ENCODE measurements at regions of chr5 and their contacts with region 1.

Region 1: GRCh38 chr5:115825948-115826347 is 9.5 kb upstream of the CDO1 start:
- DNase-seq: no peak
- H3K4me3 ChIP-seq: no peak overlapping the region
- H3K4me3 Mint-ChIP-seq: no peak overlapping the region
- H3K27ac Mint-ChIP-seq: no peak overlapping the region
- H3K4me1 ChIP-seq: no peaks in the 10 kb centered on the region
- H3K4me1 Mint-ChIP-seq: peaks cover 1% of the 10 kb centered on the region
- H3K27me3 ChIP-seq: no peaks in the 10 kb centered on the region
- H3K27me3 Mint-ChIP-seq: no peaks in the 10 kb centered on the region
- CTCF ChIP-seq: no peak

Region 2: DNA sequence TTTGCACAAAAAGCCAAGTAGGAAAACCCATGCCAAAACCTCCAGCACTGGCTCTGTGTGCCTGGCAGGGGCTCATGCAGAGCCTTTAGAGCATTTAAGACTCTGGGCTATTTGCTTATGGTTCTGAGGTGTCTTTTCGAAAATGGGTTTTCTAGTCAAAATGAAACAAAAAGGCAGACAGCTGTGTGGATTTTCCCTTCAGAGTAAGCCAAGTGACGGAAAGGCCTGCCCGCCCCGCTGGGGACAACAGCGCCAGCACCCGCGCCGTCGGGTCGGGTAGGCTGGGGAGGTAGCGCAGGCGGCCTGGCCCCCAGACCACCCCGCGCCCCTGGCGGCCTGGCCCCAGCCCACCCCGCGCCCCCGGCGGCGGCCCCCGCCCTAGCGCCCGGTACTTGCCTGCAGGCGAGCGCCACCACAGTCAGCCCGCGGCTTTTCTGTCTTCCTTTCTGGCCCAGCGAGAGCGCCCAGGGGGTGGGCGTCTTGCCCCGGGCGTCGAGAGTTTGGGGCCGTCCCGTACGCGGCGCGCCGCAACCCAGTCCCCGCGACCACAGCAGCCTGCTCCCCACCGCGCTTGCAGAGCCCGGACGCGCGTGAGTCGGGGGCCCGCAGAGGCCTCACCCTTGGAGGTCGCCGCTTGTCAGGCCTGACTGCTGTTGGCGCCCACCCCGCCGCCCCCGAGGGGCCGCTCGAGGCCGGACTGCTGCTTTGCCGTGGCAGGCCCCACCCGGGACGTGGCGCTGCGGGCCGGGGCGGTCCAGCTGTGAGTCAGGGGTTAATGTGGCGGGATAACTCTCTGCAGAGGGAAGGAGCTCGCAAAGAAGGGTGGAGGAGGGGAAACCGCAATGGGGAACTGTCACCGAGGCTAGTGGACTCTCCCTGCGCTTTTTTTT is 224.0 kb before region 1 on chr5 and contains the start of gene TICAM2:
- CTCF ChIA-PET with region 1: no interaction called
- POLR2A ChIA-PET with region 1: no interaction called
- intact Hi-C with region 1: no loop called
- DNase-seq: peak; percentile 37 to 46
- H3K4me3 ChIP-seq: peak within 1 kb of the TSS; percentile 46
- H3K4me3 Mint-ChIP-seq: peak within 1 kb of the TSS; percentile 35
- H3K27ac Mint-ChIP-seq: no peak within 1 kb of the TSS
- H3K4me1 ChIP-seq: no peaks in the 10 kb centered on the region
- H3K4me1 Mint-ChIP-seq: peaks cover 13% of the 10 kb centered on the region
- H3K27me3 ChIP-seq: no peaks in the 10 kb centered on the region
- H3K27me3 Mint-ChIP-seq: no peaks in the 10 kb centered on the region
- CTCF ChIP-seq: no peak
- total RNA-seq, gene TICAM2: 0.91 TPM in 2 replicates

Region 3: DNA sequence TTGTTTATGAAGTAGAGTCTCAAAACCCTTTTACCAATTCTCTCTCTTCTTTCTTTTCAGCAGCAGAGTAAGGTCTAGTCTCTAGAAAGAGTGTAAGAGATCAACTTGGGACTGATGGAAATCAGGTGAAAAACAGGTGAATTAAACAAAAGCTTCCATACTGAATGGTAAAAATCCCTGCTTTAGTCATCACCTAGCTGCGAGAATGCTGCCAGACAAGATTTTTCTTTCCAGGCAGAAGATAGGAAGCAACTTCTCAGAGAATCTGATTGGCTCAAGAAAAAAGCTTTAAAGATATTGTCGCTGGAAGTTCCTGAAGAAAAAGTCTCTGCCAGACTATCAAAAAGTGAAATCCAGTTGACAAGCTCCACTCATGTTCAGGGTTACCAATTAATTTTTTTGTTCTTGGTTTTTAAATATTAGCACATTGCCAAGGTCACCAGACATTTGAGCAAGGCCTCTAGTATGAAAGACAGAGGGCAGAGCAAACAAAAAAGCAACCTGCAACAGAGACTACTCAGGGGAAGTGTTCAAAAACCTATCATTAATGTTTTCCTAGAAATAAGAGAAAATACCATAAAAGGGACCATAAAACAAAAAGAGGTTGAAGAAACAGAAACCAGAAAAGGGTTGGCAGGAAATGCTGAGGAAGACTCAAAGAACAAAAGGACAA is 18.8 kb before region 1 on chr5:
- CTCF ChIA-PET with region 1: no interaction called
- POLR2A ChIA-PET with region 1: no interaction called
- intact Hi-C with region 1: loop called (anchors 2 kb)
- DNase-seq: peak in 1 of 2 experiments; percentile 34
- H3K4me3 ChIP-seq: no peak overlapping the region
- H3K4me3 Mint-ChIP-seq: peak overlapping the region; percentile 23
- H3K27ac Mint-ChIP-seq: peak overlapping the region; percentile 72
- H3K4me1 ChIP-seq: peaks cover 28% of the 10 kb centered on the region
- H3K4me1 Mint-ChIP-seq: peaks cover 15% of the 10 kb centered on the region
- H3K27me3 ChIP-seq: no peaks in the 10 kb centered on the region
- H3K27me3 Mint-ChIP-seq: no peaks in the 10 kb centered on the region
- CTCF ChIP-seq: no peak